Activated CD4-positive, alpha-beta memory T cell treated with anti-CD3 and anti-CD28 coated beads, Interleukin-2, amount 10 ng/mL, durations not matched to agents 7 days and 5 days (primary cell): ENCODE measurements at regions of chr1 and their contacts with region 1.

Region 1: DNA sequence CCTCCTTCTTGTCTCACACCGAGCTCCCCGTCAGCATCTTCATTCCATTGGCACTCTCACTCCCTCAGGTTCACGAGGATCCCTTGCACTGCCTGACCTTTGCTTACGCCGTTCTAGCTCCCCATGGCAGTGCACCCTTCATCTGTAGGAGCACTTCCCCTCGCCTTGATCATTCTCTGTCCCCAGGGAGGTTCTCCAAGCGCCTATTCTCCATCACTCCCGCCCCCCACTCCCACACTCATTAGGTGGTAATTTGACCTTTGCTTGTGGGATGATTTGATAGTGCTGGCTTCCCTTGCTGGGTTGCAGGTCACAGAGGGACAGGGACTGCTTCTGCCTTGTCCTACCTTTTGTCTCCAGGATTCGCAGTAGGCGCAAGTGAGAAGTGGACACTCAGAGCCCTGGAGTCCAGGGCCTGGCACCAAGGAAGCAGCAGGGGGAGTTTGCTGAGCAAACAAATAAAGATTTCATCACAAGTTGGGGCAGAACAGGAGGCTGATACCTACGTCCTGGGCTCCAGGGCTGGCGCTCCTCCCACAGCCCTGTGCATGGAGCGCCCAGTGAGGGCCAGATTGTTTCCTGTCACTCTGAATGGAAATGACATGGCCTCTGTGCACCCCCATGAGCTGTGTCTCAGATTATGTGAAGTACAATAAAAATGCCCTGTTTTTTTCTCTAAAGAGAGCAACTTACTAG is 82.0 kb upstream of the RUNX3 start:
- DNase-seq: no peak
- H3K4me3 Mint-ChIP-seq: no peak overlapping the region
- H3K27ac Mint-ChIP-seq: no peak overlapping the region
- H3K4me1 Mint-ChIP-seq: peaks cover 40% of the 10 kb centered on the region
- H3K27me3 Mint-ChIP-seq: peaks cover under 1% of the 10 kb centered on the region

Region 2: GRCh38 chr1:24996983-24997893 is 14.9 kb before region 1 on chr1:
- CTCF ChIA-PET with region 1: no interaction called
- POLR2A ChIA-PET with region 1: interaction called, 15 read pairs
- DNase-seq: no peak
- H3K4me3 Mint-ChIP-seq: no peak overlapping the region
- H3K27ac Mint-ChIP-seq: peak overlapping the region; percentile 38
- H3K4me1 Mint-ChIP-seq: peaks cover 85% of the 10 kb centered on the region
- H3K27me3 Mint-ChIP-seq: no peaks in the 10 kb centered on the region